ENCODE measurements at regions of chr2 and their contacts with region 1.

Region 1: DNA sequence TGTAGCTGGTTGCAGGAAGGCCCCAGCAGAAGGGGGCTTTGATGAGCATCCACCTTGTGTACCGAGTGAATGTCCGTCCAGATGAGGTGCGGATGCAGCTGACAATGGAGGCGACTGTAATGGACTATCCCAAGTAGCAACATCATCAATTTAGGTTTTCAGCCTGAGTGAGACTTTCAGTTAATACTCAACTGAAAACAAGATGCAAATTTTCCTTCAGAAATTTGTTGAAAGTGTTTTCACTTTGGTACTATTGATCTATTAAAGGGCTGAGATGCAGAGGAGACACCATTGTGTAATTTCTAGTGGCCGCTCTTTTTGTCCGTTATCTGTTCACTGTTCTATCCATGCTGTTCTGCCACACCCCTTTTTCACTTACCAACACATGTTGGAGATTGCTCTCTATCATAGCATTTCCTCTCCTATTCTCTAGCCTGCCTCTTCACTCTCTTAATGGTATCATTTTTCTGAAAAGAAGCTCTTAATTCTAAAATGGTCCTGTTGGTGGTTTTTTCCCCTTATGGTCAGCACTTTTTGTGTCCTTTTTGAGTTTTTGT is 12.0 kb upstream of the CASP8 start:
- DNase-seq: no peak
- ATAC-seq: no peak
- H3K4me3 Mint-ChIP-seq: peak overlapping the region in 5 of 10 donors; percentile 0 to 62 (median 5)
- H3K27ac Mint-ChIP-seq: peak overlapping the region; percentile 2 to 99 (median 37)
- H3K4me1 Mint-ChIP-seq: peaks cover 26 to 93% (median 86%) of the 10 kb centered on the region in 4 donors
- H3K27me3 Mint-ChIP-seq: no peaks in the 10 kb centered on the region

Region 2: GRCh38 chr2:201263779-201264178 is 15.4 kb after region 1 on chr2:
- POLR2A ChIA-PET with region 1: interaction called, 32 read pairs
- DNase-seq: peak in 2 of 10 donors; percentile 22 to 27
- ATAC-seq: no peak
- H3K4me3 Mint-ChIP-seq: peak overlapping the region; percentile 54 to 98 (median 84)
- H3K27ac Mint-ChIP-seq: peak overlapping the region; percentile 58 to 99 (median 87)
- H3K4me1 Mint-ChIP-seq: peaks cover 33 to 85% (median 77%) of the 10 kb centered on the region in 4 donors
- H3K27me3 Mint-ChIP-seq: no peaks in the 10 kb centered on the region

Measured in naive thymus-derived CD8-positive, alpha-beta T cell (primary cell).